CD4-positive, alpha-beta T cell (primary cell): ENCODE measurements at regions of chr4 and their contacts with region 1.

Region 1: DNA sequence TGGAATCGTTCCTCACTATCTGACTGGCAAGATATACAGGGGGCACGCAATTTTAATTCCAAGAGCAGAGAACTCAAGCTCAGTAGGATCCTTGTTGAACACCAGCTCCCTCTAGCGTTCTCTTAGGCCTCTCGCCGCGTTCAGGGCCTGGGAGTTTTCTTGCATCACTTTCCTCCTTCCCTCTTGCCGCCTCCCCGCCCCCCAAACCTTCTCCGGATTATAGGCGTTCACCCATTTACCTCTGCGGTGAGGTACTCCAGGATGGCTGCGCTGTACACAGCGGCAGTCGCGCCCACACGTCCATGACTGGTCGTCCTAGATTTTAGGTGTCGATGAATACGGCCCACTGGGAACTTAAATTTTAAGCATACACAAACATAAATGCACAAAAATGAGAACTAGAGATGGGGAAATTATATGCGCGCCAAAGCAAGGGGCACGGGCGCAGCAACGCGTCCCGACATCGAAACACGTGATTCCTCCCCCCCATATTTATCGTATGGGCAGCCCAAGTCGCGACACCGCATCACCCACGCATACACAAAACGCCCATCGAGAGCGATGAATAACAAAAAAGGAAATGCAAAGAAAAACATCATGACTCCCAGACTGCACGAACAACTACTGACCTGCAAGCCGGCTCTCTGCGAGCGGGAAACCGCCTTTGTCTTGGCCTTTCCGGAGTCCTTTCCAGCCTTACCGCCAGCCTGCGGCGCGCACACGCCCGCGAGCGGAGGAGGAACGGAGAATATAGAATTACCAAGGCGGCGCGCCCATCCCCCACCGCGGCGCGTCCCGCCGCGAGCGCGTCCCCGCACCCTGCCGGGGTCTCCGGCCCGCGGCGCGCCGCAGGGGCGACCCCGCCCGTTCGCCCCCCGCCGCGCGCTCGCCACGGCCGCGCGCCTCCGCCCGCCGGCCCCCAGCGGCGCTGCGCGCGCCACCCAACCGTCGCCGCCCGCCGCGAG is 759 bp downstream of the H2AZ1 start:
- DNase-seq: peak; percentile 72 to 95 (median 82)
- ATAC-seq: peak; percentile 37
- H3K4me3 ChIP-seq: peak overlapping the region; percentile 93
- H3K4me3 Mint-ChIP-seq: no peak overlapping the region
- H3K27ac ChIP-seq: peak overlapping the region; percentile 84 to 90
- H3K27ac Mint-ChIP-seq: no peak overlapping the region
- H3K4me1 ChIP-seq: peaks cover 33% of the 10 kb centered on the region
- H3K4me1 Mint-ChIP-seq: peaks cover 31% of the 10 kb centered on the region
- H3K27me3 ChIP-seq: no peaks in the 10 kb centered on the region
- H3K27me3 Mint-ChIP-seq: no peaks in the 10 kb centered on the region
- CTCF ChIP-seq: peak; percentile 86

Region 2: DNA sequence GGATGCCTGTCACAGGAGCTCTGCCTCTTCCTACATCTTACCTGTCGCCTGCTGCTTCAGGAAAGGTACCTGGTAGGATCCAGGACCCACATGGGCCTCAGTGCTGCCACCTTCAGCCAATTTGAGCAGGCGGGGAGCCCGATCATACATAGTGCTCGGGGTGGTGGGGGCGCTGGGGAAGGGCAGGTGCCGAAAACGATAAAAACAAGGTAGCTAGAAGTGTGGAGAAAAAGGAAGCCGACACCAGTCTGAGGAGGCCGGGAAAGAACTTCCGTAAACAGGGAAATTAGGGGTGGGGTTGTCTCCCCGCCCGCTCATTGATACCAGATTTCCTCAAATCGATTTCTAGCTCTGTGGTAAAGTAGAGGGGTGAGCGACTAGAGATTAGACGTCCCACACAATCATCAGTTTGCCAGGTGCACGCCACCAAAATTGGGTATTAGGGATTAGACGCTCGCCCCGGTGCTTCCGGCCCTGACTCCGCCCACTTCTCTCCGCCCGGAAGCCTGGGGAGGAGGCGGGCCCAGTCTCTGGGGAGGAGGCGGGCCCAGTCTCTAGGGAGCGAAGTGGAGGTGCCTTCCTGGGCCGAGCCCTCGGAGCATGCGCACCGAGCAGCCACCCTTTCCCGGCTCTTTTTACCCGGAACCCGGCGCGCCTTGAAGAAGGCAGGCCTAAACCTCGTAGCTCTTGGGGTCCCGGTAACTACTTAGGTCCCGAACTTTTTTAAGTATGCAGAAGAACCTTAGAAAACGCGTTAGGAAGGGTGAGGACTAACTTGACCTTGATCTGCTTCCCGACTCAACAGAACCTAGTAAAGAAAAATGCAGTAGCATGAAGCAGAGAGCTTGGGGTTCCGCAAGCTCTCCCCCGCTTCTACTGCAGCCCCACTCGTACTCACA is 1806.1 kb before region 1 on chr4 and contains the start of gene STPG2:
- CTCF ChIA-PET with region 1: interaction called, 3 read pairs
- POLR2A ChIA-PET with region 1: no interaction called
- intact Hi-C with region 1: loop called in 1 of 2 experiments (anchors 10 kb)
- DNase-seq: peak; percentile 85 to 97 (median 94)
- ATAC-seq: peak; percentile 98
- H3K4me3 ChIP-seq: peak within 1 kb of the TSS; percentile 88
- H3K4me3 Mint-ChIP-seq: peak within 1 kb of the TSS; percentile 90
- H3K27ac ChIP-seq: peak within 1 kb of the TSS; percentile 75 to 96
- H3K27ac Mint-ChIP-seq: peak within 1 kb of the TSS; percentile 93
- H3K4me1 ChIP-seq: peaks cover 17% of the 10 kb centered on the region
- H3K4me1 Mint-ChIP-seq: peaks cover 21% of the 10 kb centered on the region
- H3K27me3 ChIP-seq: no peaks in the 10 kb centered on the region
- H3K27me3 Mint-ChIP-seq: no peaks in the 10 kb centered on the region
- CTCF ChIP-seq: peak; percentile 73
- total RNA-seq, gene STPG2: 0.22 to 0.28 TPM

Region 3: DNA sequence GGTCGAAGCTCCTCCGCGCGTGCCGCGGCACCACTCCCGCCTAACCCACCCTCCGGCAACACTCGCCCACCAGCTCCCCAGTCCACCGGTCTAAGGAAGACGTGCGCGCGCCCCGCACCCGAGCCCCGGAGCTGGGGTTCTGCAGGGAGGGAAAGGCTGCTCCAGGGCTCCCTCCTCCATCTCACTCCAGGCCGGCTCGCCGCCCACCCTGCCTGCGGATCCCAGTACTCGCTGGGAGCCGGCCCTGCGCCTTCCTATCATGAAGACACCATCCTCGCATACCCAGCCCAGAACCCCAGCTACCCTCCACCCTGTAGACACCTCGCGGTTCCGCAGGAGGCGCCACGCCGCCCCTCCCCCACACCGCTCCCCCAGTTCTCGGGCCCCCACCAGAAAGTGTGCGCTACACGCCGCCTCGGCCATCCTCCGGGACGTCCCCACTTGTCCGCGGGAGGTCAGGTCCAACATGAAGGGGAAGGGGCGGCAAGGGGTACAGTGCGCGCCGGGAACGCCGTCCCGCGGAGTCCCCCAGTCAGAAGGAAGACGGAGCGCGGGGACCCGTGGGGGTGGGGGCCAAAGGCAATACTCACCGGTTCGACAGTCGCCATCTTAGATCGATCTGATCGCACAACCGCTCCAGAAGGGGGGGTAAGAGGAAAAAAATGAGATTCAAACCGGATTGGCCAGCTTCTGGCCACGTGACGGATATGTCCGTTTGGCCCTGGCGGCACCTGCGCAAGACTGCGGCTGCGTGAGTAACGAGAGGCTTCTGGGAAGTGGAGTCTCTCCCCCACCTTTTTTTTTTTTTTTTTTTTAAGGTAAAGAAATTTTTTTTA is 1020.6 kb before region 1 on chr4 and contains the start of gene EIF4E:
- CTCF ChIA-PET with region 1: no interaction called
- POLR2A ChIA-PET with region 1: interaction called, 5 read pairs
- intact Hi-C with region 1: loop called (anchors 2 to 5 kb)
- DNase-seq: peak; percentile 90 to 100 (median 95)
- ATAC-seq: peak; percentile 82
- H3K4me3 ChIP-seq: peak within 1 kb of the TSS; percentile 96
- H3K4me3 Mint-ChIP-seq: peak within 1 kb of the TSS; percentile 98
- H3K27ac ChIP-seq: peak within 1 kb of the TSS; percentile 85 to 94
- H3K27ac Mint-ChIP-seq: peak within 1 kb of the TSS; percentile 98
- H3K4me1 ChIP-seq: peaks cover 17% of the 10 kb centered on the region
- H3K4me1 Mint-ChIP-seq: peaks cover 46% of the 10 kb centered on the region
- H3K27me3 ChIP-seq: no peaks in the 10 kb centered on the region
- H3K27me3 Mint-ChIP-seq: no peaks in the 10 kb centered on the region
- CTCF ChIP-seq: peak; percentile 34
- total RNA-seq, gene EIF4E: 47.2 to 49.2 TPM

Region 4: DNA sequence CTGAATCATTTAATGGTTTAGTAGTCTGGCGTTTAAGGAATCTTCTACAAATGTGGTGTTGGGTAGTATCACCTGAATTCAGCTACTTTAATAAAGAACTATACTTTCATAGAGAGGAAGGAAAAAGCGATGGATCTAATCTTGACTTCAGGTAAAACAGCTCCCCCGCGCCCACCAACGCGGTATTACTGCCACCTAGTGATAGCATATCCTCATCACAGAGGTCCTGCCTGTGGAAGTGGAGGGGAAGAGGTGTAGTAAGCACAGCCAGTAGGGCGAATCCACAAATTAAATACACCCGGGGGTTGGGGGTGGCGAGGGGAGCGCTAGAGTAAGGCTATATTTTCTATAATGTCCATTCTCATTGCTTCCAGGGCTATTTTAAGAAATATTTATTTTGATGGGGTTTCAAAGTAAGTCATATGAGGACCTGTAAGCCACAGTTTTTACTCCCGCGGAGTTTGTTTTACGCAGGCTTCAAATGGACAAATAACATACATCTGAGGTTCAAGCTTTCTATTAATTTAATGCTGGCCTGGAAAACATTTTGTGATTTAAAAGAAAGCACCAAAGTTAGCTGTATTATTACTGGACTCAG is 141.0 kb before region 1 on chr4:
- CTCF ChIA-PET with region 1: interaction called, 17 read pairs
- POLR2A ChIA-PET with region 1: interaction called, 11 read pairs
- intact Hi-C with region 1: loop called in 1 of 2 experiments (anchors 2 kb)
- DNase-seq: peak; percentile 53 to 82 (median 66)
- ATAC-seq: peak; percentile 98
- H3K4me3 ChIP-seq: no peak overlapping the region
- H3K4me3 Mint-ChIP-seq: no peak overlapping the region
- H3K27ac ChIP-seq: no peak overlapping the region
- H3K27ac Mint-ChIP-seq: no peak overlapping the region
- H3K4me1 ChIP-seq: peaks cover 3% of the 10 kb centered on the region
- H3K4me1 Mint-ChIP-seq: peaks cover 6% of the 10 kb centered on the region
- H3K27me3 ChIP-seq: no peaks in the 10 kb centered on the region
- H3K27me3 Mint-ChIP-seq: peaks cover 6% of the 10 kb centered on the region
- CTCF ChIP-seq: peak; percentile 85

Region 5: DNA sequence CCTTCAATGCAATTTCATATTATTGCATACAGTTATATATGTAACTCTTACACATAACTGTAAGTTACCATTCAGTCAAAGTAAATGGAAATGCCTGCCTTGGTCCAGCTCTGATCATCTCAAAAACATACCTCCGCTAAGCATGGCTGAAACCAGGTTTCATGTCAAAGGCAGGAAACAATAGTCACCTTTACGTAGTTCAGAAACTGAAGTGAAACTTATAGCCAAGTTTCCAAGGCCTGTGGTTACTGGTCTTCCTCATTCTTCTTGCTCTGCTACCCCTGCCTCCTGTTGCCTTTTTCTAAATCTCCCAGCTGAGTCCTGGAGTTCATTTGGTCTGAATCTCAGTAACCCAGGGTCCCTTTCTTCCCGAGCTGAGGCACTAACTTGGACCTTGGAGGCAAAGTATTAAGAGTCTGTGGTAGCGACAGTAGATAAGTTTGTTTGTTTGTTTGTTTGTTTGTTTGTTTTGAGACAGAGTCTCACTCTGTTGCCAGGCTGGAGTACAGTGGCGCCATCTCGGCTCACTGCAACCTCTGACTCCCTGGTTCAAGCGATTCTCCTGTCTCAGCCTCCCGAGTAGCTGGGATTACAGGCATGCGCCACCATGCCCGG is 101.8 kb before region 1 on chr4:
- CTCF ChIA-PET with region 1: interaction called, 5 read pairs
- POLR2A ChIA-PET with region 1: interaction called, 25 read pairs
- intact Hi-C with region 1: no loop called
- DNase-seq: peak in 5 of 14 experiments; percentile 6 to 63 (median 57)
- ATAC-seq: peak; percentile 37
- H3K4me3 ChIP-seq: peak overlapping the region; percentile 15
- H3K4me3 Mint-ChIP-seq: peak overlapping the region; percentile 53
- H3K27ac ChIP-seq: peak overlapping the region in 1 of 2 donors; percentile 68
- H3K27ac Mint-ChIP-seq: peak overlapping the region; percentile 86
- H3K4me1 ChIP-seq: peaks cover 35% of the 10 kb centered on the region
- H3K4me1 Mint-ChIP-seq: peaks cover 59% of the 10 kb centered on the region
- H3K27me3 ChIP-seq: no peaks in the 10 kb centered on the region
- H3K27me3 Mint-ChIP-seq: no peaks in the 10 kb centered on the region
- CTCF ChIP-seq: no peak

Region 6: DNA sequence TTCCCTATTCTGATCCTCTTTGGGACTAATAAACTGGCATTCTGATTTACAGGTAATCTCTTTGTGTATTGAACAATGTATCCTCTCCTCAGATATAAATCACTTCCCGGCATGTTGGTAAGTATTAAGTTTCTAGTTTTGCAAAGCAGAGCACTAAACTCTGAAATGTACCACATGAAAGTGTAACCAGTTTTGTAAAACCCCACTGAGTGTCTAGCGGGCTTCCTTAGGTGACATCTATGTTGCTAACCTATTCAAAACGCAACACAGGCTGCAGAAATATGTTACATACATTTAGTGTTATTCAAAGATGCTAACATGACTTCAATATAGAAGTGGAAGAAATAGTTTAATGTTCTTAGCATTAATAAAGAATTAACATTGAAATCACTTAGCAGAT is 28.1 kb before region 1 on chr4:
- CTCF ChIA-PET with region 1: interaction called, 4 read pairs
- POLR2A ChIA-PET with region 1: interaction called, 25 read pairs
- intact Hi-C with region 1: loop called in 1 of 2 experiments (anchors 2 kb)
- DNase-seq: peak in 3 of 14 experiments; percentile 10 to 44 (median 41)
- ATAC-seq: peak; percentile 96
- H3K4me3 ChIP-seq: no peak overlapping the region
- H3K4me3 Mint-ChIP-seq: no peak overlapping the region
- H3K27ac ChIP-seq: no peak overlapping the region
- H3K27ac Mint-ChIP-seq: peak overlapping the region; percentile 59
- H3K4me1 ChIP-seq: peaks cover 1% of the 10 kb centered on the region
- H3K4me1 Mint-ChIP-seq: peaks cover 24% of the 10 kb centered on the region
- H3K27me3 ChIP-seq: no peaks in the 10 kb centered on the region
- H3K27me3 Mint-ChIP-seq: no peaks in the 10 kb centered on the region
- CTCF ChIP-seq: no peak

Region 7: GRCh38 chr4:100093091-100093866 is 144.0 kb after region 1 on chr4:
- CTCF ChIA-PET with region 1: interaction called, 11 read pairs
- POLR2A ChIA-PET with region 1: interaction called, 11 read pairs
- intact Hi-C with region 1: loop called in 1 of 2 experiments (anchors 10 kb)
- DNase-seq: peak; percentile 70 to 96 (median 81)
- ATAC-seq: peak; percentile 99
- H3K4me3 ChIP-seq: no peak overlapping the region
- H3K4me3 Mint-ChIP-seq: no peak overlapping the region
- H3K27ac ChIP-seq: no peak overlapping the region
- H3K27ac Mint-ChIP-seq: peak overlapping the region; percentile 92
- H3K4me1 ChIP-seq: peaks cover 7% of the 10 kb centered on the region
- H3K4me1 Mint-ChIP-seq: peaks cover 30% of the 10 kb centered on the region
- H3K27me3 ChIP-seq: no peaks in the 10 kb centered on the region
- H3K27me3 Mint-ChIP-seq: no peaks in the 10 kb centered on the region
- CTCF ChIP-seq: peak; percentile 78